CD8-positive, alpha-beta T cell (primary cell): ENCODE measurements at regions of chr2 and their contacts with region 1.

Region 1: DNA sequence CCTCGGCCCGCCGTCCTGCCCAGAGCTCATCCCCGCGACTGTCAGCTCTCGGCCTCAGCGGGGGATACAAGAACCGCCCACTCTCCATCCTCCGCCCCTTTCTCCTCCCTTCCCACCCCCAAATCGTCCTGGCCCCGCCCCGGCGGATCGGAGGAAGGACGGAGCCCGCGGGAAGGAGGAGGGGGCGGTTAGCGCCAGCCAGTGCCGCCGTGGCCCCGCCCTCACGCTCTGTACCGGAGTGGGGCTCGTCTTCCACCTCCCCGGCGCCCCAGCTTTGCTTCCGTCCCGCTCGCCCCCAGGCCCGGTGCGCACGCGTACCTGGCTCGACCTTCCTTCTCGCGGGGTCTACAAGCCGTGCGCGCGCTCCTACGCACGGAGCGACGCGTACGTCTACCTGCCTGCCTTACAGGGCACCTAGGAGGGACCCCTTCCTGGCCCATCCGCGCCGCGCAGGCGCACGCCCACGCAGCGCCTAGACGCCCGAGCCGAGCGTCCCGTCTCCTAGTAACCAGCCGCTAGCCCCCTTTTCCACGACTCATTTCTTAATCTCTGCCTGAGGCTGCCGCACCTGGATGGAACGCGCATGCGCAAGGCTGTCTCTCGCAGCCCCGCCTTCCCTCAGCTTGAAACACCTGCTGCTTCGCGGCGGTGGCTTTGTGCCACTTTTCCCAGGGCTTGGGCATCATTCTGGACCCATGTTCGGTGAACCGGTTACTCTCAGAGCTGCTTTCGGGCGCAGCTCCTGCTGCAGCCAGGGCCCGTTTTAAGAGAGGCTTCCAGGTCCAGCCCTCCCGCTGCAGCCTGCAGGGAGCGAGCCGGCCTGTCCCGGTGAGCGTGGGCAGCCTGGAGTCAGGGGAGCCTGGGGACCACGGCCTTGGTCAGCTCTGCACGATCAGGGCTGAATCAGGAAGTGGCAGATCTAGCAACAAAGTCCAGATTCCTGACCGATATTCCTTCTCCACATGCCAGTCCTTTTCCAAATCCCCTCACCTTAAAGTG is at the start of gene C2orf15:
- DNase-seq: peak; percentile 91 to 98 (median 97)
- ATAC-seq: peak; percentile 88
- H3K4me3 ChIP-seq: peak within 1 kb of the TSS; percentile 86 to 97
- H3K4me3 Mint-ChIP-seq: peak within 1 kb of the TSS; percentile 88
- H3K27ac ChIP-seq: peak within 1 kb of the TSS; percentile 90 to 91
- H3K27ac Mint-ChIP-seq: peak within 1 kb of the TSS; percentile 96
- H3K4me1 ChIP-seq: peaks cover 14% of the 10 kb centered on the region
- H3K4me1 Mint-ChIP-seq: peaks cover 25% of the 10 kb centered on the region
- H3K27me3 ChIP-seq: no peaks in the 10 kb centered on the region
- H3K27me3 Mint-ChIP-seq: no peaks in the 10 kb centered on the region
- CTCF ChIP-seq: no peak
- total RNA-seq, gene C2orf15: 1.3 to 1.8 TPM

Region 2: GRCh38 chr2:98556344-98557033 is 584.9 kb before region 1 on chr2:
- CTCF ChIA-PET with region 1: no interaction called
- POLR2A ChIA-PET with region 1: no interaction called
- intact Hi-C with region 1: no loop called
- DNase-seq: peak in 1 of 9 experiments; percentile 37
- ATAC-seq: peak; percentile 71
- H3K4me3 ChIP-seq: no peak overlapping the region
- H3K4me3 Mint-ChIP-seq: no peak overlapping the region
- H3K27ac ChIP-seq: no peak overlapping the region
- H3K27ac Mint-ChIP-seq: peak overlapping the region; percentile 78
- H3K4me1 ChIP-seq: peaks cover 14% of the 10 kb centered on the region
- H3K4me1 Mint-ChIP-seq: peaks cover 57% of the 10 kb centered on the region
- H3K27me3 ChIP-seq: no peaks in the 10 kb centered on the region
- H3K27me3 Mint-ChIP-seq: no peaks in the 10 kb centered on the region
- CTCF ChIP-seq: no peak

Region 3: DNA sequence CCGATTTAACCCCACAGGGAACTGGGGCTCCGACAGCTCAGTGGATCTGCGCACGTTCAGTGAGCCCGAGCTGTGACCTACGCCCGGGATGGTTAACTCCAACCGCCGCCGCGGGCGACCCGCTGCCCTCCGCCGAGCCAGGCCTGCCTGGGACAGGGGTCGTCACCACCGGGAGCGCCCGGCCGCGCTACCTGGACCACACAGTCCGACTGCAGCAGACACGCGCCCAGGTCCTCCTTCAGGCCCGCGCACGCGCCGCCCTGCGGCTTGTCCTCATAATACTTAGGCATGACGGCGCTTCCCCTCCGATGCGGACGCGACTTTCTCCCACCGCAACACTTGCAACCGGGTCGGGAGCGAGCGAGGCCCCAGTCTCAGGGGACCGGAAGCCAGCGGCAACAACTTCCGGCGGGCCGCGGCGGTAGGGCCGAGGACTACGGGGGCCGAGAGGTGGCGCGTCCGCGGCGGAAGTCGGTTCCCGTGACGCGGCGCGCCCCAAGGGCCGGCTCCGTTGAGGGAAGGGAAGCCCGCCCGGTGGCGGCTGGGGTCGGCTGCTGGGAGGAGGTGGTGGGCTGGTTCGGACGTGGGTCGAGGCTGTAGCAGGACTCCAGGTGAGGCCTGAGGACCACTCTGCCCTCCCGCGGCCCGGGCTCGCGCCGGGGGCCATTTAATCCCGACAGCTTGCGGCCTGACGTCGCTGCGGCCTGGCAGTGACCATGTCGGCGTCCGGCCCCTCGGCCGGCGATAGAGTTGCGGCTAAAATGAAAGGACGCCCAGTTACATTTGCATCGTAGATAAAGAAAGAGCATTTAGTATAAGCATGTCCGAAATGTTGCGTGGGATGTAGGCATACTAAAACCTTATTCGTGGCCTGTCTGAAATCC is 533.1 kb before region 1 on chr2 and contains the starts of genes COA5 and UNC50:
- CTCF ChIA-PET with region 1: no interaction called
- POLR2A ChIA-PET with region 1: no interaction called
- intact Hi-C with region 1: loop called in 1 of 2 experiments (anchors 5 kb)
- DNase-seq: peak; percentile 84 to 95 (median 89)
- ATAC-seq: peak; percentile 81
- H3K4me3 ChIP-seq: peak within 1 kb of the TSS; percentile 84 to 94
- H3K4me3 Mint-ChIP-seq: peak within 1 kb of the TSS; percentile 89
- H3K27ac ChIP-seq: peak within 1 kb of the TSS; percentile 87 to 95
- H3K27ac Mint-ChIP-seq: peak within 1 kb of the TSS; percentile 95
- H3K4me1 ChIP-seq: peaks cover 48% of the 10 kb centered on the region
- H3K4me1 Mint-ChIP-seq: peaks cover 74% of the 10 kb centered on the region
- H3K27me3 ChIP-seq: no peaks in the 10 kb centered on the region
- H3K27me3 Mint-ChIP-seq: no peaks in the 10 kb centered on the region
- CTCF ChIP-seq: no peak
- total RNA-seq, gene COA5: 19.7 to 24.1 TPM
- total RNA-seq, gene UNC50: 12.5 to 14.4 TPM

Region 4: GRCh38 chr2:99354070-99354469 is 212.7 kb after region 1 on chr2:
- CTCF ChIA-PET with region 1: no interaction called
- POLR2A ChIA-PET with region 1: no interaction called
- intact Hi-C with region 1: no loop called
- DNase-seq: no peak
- ATAC-seq: no peak
- H3K4me3 ChIP-seq: no peak overlapping the region
- H3K4me3 Mint-ChIP-seq: no peak overlapping the region
- H3K27ac ChIP-seq: no peak overlapping the region
- H3K27ac Mint-ChIP-seq: no peak overlapping the region
- H3K4me1 ChIP-seq: peaks cover 18% of the 10 kb centered on the region
- H3K4me1 Mint-ChIP-seq: peaks cover 73% of the 10 kb centered on the region
- H3K27me3 ChIP-seq: no peaks in the 10 kb centered on the region
- H3K27me3 Mint-ChIP-seq: no peaks in the 10 kb centered on the region
- CTCF ChIP-seq: no peak